PC-9 (cell line): ENCODE measurements at regions of chr11 and their contacts with region 1.

Region 1: GRCh38 chr11:9590717-9591116 is 17.2 kb downstream of the WEE1 start:
- DNase-seq: no peak
- H3K4me3 ChIP-seq: no peak overlapping the region
- H3K27ac ChIP-seq: no peak overlapping the region
- H3K4me1 ChIP-seq: no peaks in the 10 kb centered on the region
- H3K27me3 ChIP-seq: no peaks in the 10 kb centered on the region
- CTCF ChIP-seq: no peak

Region 2: GRCh38 chr11:9250139-9250582 is 340.6 kb before region 1 on chr11:
- CTCF ChIA-PET with region 1: no interaction called
- POLR2A ChIA-PET with region 1: no interaction called
- intact Hi-C with region 1: no loop called
- DNase-seq: no peak
- H3K4me3 ChIP-seq: no peak overlapping the region
- H3K27ac ChIP-seq: no peak overlapping the region
- H3K4me1 ChIP-seq: no peaks in the 10 kb centered on the region
- H3K27me3 ChIP-seq: no peaks in the 10 kb centered on the region
- CTCF ChIP-seq: no peak

Region 3: DNA sequence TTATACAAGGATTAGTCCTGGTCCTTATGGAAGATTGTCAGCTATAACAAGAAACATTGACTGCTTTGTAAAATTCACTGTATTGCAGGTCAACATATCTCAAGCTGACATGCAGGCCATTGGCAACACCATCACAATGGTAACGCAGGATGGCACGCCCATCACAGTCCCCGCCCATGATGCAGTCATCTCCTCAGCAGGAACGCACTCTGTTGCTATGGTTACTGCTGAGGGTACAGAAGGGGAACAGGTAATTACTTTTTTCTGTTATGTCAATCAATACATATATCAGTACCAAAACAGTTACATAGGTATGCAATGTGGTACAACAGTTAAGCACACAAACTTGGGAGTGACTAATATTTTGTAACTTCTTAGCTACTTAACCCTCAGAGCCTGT is 74.6 kb before region 1 on chr11:
- CTCF ChIA-PET with region 1: no interaction called
- POLR2A ChIA-PET with region 1: no interaction called
- intact Hi-C with region 1: no loop called
- DNase-seq: peak in 1 of 2 experiments; percentile 37
- H3K4me3 ChIP-seq: no peak overlapping the region
- H3K27ac ChIP-seq: no peak overlapping the region
- H3K4me1 ChIP-seq: no peaks in the 10 kb centered on the region
- H3K27me3 ChIP-seq: no peaks in the 10 kb centered on the region
- CTCF ChIP-seq: no peak

Region 4: DNA sequence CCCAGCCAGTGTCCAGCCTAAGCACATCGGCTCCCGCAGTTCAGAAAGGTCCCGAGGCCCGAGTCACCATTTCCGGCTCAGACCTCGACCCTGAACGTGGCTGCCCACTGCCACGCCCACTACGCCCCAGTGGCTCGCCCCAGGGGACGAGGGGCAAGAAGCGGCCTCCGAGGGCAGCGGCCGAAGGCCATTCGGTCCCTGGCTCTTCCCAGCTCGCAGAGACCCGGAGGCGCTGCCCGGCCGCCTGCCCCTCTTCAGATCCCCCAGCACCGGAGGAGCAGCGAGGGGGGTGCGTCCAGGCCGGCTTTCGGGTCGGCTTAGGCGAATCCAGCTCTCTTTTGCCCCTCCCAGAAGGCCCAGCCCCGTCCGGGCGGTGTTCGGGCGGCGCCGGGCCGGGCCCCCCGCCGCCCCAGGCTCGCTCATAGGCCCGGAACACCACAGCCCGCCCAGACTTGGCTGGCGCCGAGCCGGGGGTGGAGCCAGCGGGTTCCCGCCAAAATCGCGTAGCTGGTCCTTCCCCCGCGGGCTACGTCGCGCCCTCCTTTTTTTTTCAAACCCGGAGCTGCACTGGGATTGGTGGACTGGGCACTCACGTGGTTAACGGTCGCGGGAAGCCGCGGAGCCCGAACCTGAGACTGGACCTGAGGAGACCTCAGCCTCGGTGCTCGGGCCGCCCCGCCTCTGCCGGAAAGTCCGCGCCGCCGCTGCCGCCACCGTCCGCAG is 17.5 kb before region 1 on chr11 and contains the start of gene WEE1:
- CTCF ChIA-PET with region 1: no interaction called
- POLR2A ChIA-PET with region 1: no interaction called
- intact Hi-C with region 1: no loop called
- DNase-seq: peak; percentile 86 to 98
- H3K4me3 ChIP-seq: peak within 1 kb of the TSS; percentile 87
- H3K27ac ChIP-seq: peak within 1 kb of the TSS; percentile 98
- H3K4me1 ChIP-seq: peaks cover 50% of the 10 kb centered on the region
- H3K27me3 ChIP-seq: no peaks in the 10 kb centered on the region
- CTCF ChIP-seq: no peak
- total RNA-seq, gene WEE1: 32.2 and 37.1 TPM in 2 replicates

Region 5: GRCh38 chr11:9639099-9639498 is 48.4 kb after region 1 on chr11:
- CTCF ChIA-PET with region 1: no interaction called
- POLR2A ChIA-PET with region 1: no interaction called
- intact Hi-C with region 1: no loop called
- DNase-seq: no peak
- H3K4me3 ChIP-seq: no peak overlapping the region
- H3K27ac ChIP-seq: no peak overlapping the region
- H3K4me1 ChIP-seq: no peaks in the 10 kb centered on the region
- H3K27me3 ChIP-seq: no peaks in the 10 kb centered on the region
- CTCF ChIP-seq: no peak

Region 6: DNA sequence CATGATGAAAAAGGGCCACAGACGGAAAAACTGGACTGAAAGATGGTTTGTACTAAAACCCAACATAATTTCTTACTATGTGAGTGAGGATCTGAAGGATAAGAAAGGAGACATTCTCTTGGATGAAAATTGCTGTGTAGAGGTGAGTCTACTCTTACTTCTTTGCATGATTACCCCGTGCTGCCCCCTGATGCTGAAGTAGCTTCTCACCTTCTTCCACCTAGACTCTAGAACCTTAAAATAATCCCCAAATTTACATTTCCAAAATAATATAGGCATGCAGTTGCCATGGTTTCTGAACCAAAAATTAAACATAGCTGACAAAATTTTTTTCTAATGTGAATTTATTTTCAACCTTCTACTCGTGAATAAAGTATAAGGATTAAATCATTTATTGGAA is 137.3 kb after region 1 on chr11:
- CTCF ChIA-PET with region 1: no interaction called
- POLR2A ChIA-PET with region 1: interaction called, 10 read pairs
- intact Hi-C with region 1: no loop called
- DNase-seq: no peak
- H3K4me3 ChIP-seq: no peak overlapping the region
- H3K27ac ChIP-seq: no peak overlapping the region
- H3K4me1 ChIP-seq: peaks cover 14% of the 10 kb centered on the region; the same call in 1 of the 2 replicates
- H3K27me3 ChIP-seq: no peaks in the 10 kb centered on the region
- CTCF ChIP-seq: no peak